Caco-2 (cell line): ENCODE measurements at regions of chr19 and their contacts with region 1.

Region 1: GRCh38 chr19:2475702-2476450 is at the start of gene GADD45B:
- DNase-seq: peak; percentile 98
- H3K4me3 ChIP-seq: peak within 1 kb of the TSS; percentile 79
- H3K4me3 Mint-ChIP-seq: peak within 1 kb of the TSS; percentile 88
- H3K27ac Mint-ChIP-seq: peak within 1 kb of the TSS; percentile 91
- H3K4me1 ChIP-seq: no peaks in the 10 kb centered on the region
- H3K4me1 Mint-ChIP-seq: no peaks in the 10 kb centered on the region
- H3K27me3 ChIP-seq: no peaks in the 10 kb centered on the region
- H3K27me3 Mint-ChIP-seq: no peaks in the 10 kb centered on the region
- CTCF ChIP-seq: no peak
- total RNA-seq, gene GADD45B: 20.2 and 23.8 TPM in 2 replicates

Region 2: DNA sequence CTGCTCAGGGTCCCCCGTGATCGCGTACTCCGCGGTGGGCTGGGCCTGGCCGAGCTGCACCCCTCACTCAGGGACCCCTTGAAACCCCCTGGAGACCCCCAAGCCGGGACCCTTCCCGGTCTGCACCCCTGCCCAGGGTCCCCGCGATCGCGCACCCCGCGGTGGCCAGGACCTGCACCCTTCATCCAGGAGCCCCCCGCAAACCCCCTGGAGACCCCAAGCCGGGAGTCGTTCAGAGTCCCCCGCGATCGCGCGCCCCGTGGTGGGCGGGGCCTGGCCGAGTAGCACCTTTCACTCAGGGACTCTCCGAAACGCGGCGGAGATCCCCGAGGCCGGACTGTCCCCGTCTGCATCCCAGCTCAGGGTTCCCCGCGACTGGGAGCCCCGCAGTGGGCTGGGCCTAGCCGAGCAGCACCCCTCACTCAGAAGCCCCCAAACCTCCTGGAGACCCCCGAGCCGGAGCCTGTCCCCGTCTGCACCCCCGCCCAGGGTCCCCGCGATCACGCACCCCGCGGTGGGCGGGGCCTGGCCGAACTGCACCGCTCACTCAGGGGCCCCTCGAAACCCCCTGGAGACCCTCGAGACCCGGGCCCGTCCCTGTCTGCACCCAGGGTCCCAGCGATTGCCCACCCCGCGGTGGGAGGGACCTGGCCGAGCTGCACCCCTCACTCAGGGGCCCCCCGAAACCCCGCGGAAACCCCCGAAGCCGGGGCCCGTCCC is 19.9 kb before region 1 on chr19:
- CTCF ChIA-PET with region 1: no interaction called
- POLR2A ChIA-PET with region 1: interaction called, 22 read pairs
- intact Hi-C with region 1: no loop called
- DNase-seq: peak in 1 of 2 experiments; percentile 36
- H3K4me3 ChIP-seq: peak overlapping the region; percentile 98
- H3K4me3 Mint-ChIP-seq: peak overlapping the region; percentile 69
- H3K27ac Mint-ChIP-seq: peak overlapping the region; percentile 56
- H3K4me1 ChIP-seq: peaks cover 5% of the 10 kb centered on the region; the same call in 1 of the 2 replicates
- H3K4me1 Mint-ChIP-seq: no peaks in the 10 kb centered on the region
- H3K27me3 ChIP-seq: no peaks in the 10 kb centered on the region
- H3K27me3 Mint-ChIP-seq: no peaks in the 10 kb centered on the region
- CTCF ChIP-seq: no peak

Region 3: GRCh38 chr19:2503521-2504109 is 27.7 kb after region 1 on chr19:
- CTCF ChIA-PET with region 1: interaction called, 6 read pairs
- POLR2A ChIA-PET with region 1: interaction called, 15 read pairs
- intact Hi-C with region 1: no loop called
- DNase-seq: peak in 1 of 2 experiments; percentile 34
- H3K4me3 ChIP-seq: no peak overlapping the region
- H3K4me3 Mint-ChIP-seq: peak overlapping the region; percentile 29
- H3K27ac Mint-ChIP-seq: peak overlapping the region; percentile 35
- H3K4me1 ChIP-seq: peaks cover 14% of the 10 kb centered on the region; the same call in 1 of the 2 replicates
- H3K4me1 Mint-ChIP-seq: no peaks in the 10 kb centered on the region
- H3K27me3 ChIP-seq: no peaks in the 10 kb centered on the region
- H3K27me3 Mint-ChIP-seq: no peaks in the 10 kb centered on the region
- CTCF ChIP-seq: no peak

Region 4: DNA sequence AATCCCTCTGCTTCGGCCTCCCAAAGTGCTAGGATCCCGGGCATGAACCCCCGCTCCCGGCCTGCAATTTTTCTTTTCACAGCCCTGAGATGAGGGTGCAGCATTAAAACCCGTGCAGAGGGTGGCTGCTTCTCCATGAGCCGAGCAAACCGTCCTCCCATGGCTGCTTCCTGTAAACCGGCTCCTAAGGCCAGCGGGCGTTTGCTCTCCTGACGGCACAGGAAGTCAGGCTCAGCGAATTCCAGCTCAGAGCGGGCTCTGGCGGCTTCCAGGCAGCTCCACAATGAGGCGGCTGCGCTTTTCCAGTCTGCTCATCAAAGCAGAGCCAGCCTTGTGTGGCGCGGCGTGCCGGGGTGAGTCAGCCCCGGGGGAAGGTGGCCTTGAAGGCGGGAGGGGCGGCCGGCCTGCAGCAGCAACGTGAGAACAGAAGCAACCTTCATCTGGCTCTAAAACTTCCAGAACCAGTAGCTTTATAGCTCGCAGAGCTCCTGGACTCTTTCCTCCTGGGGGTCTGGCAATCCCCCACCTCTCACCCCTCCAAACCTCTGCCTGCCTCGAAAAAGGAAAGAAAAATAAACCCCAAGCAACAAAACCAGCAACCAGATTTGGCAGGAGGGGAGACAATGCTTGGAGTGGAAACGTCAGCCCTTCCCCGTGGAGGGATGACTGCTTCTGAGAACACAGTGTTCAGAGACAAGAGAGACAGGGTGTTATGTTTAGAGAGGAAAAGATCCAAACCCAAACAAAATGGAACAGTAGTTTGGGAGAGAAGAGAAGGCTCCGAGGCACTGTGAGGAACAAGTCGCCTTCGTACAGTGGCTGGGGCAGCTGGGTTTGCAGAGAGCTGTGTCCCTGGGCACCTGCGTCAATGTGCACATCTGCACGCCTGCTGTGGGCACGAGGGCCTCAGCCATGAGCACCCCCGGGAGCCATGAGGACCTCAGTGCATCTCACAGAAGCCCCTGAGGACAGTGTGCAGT is 67.9 kb after region 1 on chr19:
- CTCF ChIA-PET with region 1: interaction called, 13 read pairs
- POLR2A ChIA-PET with region 1: interaction called, 139 read pairs
- intact Hi-C with region 1: loop called (anchors 1 kb)
- DNase-seq: peak; percentile 92 to 94
- H3K4me3 ChIP-seq: no peak overlapping the region
- H3K4me3 Mint-ChIP-seq: peak overlapping the region; percentile 63
- H3K27ac Mint-ChIP-seq: peak overlapping the region; percentile 95
- H3K4me1 ChIP-seq: peaks cover 52% of the 10 kb centered on the region
- H3K4me1 Mint-ChIP-seq: peaks cover 28% of the 10 kb centered on the region
- H3K27me3 ChIP-seq: no peaks in the 10 kb centered on the region
- H3K27me3 Mint-ChIP-seq: no peaks in the 10 kb centered on the region
- CTCF ChIP-seq: peak in 1 of 2 experiments; percentile 46

Region 5: DNA sequence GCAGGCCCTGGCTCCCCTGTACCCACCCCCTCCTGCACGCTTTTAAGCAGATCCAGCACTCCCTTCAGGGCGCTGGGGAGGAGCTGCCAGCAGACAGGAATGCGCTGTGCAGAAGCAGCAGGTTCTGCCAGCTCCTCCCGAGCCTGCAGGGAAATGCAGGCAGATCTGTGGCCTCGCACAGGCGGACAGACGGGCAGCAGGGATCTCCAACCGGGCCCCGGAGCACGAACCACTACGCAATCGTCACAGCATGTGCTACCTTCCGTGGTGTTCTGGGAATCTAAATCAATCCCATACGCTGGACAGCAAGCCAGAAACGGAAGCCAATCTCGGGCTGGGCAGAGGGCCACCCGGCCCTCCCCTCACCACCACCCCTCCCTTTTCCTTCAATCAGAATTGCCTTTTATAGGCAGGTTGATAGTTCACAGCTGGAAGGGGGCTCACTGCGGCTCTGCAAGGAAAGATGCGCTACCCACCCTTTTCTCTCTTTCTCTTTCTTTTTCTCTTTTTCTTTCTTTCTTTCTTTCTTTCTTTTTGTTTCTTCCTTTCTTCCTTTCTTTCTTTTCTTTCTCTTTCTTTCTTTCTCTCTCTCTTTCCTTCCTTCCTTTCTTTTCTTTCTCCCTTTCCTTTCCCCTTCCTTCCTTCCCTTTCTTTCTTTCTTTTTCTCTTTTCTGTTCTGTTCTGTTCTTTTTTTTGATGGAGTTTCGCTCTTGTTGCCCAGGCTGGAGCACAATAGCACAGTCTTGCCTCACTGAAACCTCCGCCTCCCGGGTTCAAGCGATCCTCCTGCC is 126.7 kb after region 1 on chr19:
- CTCF ChIA-PET with region 1: interaction called, 3 read pairs
- POLR2A ChIA-PET with region 1: interaction called, 14 read pairs
- intact Hi-C with region 1: loop called (anchors 5 kb)
- DNase-seq: peak in 1 of 2 experiments; percentile 52
- H3K4me3 ChIP-seq: no peak overlapping the region
- H3K4me3 Mint-ChIP-seq: no peak overlapping the region
- H3K27ac Mint-ChIP-seq: no peak overlapping the region
- H3K4me1 ChIP-seq: 0 out of 2 replicates have a peak, but pooled peaks cover 3% of the 10 kb centered on the region
- H3K4me1 Mint-ChIP-seq: peaks cover 7% of the 10 kb centered on the region
- H3K27me3 ChIP-seq: no peaks in the 10 kb centered on the region
- H3K27me3 Mint-ChIP-seq: no peaks in the 10 kb centered on the region
- CTCF ChIP-seq: no peak